Activated CD4-positive, alpha-beta memory T cell treated with anti-CD3 and anti-CD28 coated beads for 36 hours (primary cell): ENCODE measurements at regions of chr5 and their contacts with region 1.

Region 1: DNA sequence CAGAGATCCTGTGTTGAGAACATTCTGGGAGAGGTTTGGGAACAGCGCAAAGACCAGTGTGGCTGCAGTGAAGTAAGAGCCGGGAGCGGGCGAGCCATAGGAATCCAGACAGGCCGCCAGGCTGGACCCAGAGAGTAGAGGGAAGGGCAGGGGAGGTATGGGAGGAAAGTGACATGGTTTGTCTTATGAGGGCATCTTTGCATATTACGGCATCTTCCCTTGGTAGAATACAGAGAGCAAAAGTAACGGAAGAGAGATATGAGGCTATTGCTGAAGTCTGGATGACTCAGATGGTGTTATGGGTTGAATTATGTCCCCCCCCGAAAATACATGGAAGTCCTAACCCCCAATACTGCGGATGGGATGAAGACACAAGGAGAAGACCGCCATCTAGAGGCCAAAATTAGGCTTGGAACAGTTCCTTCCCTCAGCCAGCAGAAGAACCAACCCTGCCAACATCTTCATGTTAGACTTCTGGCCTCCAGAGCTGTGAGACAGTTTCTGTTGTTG is 268.2 kb downstream of the MAST4 start:
- DNase-seq: peak; percentile 37
- H3K4me3 Mint-ChIP-seq: no peak overlapping the region
- H3K27ac Mint-ChIP-seq: no peak overlapping the region
- H3K4me1 Mint-ChIP-seq: peaks cover 8% of the 10 kb centered on the region
- H3K27me3 Mint-ChIP-seq: peaks cover 10% of the 10 kb centered on the region

Region 2: DNA sequence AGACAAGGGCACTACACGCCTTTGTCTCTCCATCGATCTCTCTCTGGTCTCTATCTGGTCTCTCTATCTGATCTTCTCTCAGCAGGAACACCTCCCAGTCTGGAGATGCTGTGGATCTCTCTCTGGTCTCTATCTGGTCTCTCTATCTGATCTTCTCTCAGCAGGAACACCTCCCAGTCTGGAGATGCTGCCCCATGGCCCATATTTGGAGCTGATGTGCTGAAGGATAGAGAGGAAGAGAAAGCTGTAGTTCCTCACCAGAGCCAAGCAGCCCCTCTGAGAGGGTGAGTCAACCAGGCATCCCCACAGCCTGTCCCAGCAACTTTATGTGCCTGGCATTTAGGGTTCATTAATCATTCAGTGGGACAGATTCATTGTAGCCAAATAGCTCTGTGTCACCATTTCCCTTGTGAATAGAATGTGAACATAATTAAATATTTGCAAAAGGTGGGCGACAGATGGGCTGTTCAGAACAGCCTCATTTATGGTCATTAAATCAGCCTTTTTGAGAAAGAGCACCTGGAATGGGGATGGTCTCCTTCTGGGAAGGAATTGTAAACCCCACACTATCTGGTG is 457.5 kb before region 1 on chr5:
- CTCF ChIA-PET with region 1: no interaction called
- POLR2A ChIA-PET with region 1: no interaction called
- intact Hi-C with region 1: no loop called
- DNase-seq: no peak
- H3K4me3 Mint-ChIP-seq: no peak overlapping the region
- H3K27ac Mint-ChIP-seq: no peak overlapping the region
- H3K4me1 Mint-ChIP-seq: no peaks in the 10 kb centered on the region
- H3K27me3 Mint-ChIP-seq: peaks cover 12% of the 10 kb centered on the region

Region 3: DNA sequence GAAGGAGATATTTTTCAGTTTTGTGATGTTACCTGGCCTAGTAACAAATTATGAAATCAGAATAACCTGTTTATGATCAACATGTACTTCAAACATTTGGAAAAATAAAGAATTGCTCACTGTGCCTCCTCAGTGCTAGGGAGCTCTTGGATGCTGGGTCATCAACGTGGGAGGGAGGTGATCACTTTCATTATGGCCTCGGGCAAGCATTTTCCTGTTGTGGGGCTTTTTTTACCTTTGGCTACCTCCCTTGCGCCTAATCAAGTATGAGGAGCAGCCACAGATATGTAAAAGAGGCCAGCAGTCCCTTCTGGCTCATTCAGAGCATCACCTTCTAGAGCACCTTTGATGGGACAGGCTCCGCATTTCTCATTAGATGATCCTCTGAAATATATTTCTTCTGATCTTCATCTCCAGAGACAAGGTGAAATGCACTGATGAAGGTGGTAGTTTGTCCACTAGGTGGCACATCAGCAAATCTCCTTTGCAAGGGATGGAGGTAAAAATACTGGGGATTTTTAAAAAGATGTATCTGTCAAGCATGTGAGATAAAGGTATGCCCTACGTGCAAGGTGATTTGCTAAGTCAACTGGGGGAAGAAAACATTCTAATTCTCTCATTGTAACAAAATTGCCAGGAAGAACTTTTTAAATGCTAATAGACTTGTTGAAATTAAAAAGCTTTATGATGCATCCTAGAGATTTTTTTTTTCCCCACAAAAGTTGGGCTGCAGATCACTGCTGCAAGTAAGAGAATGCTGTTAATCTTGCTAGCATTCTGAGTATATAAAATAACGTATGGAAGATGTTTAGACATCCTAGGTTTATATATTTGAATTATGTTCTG is 50.0 kb before region 1 on chr5:
- CTCF ChIA-PET with region 1: interaction called, 37 read pairs
- POLR2A ChIA-PET with region 1: no interaction called
- intact Hi-C with region 1: loop called (anchors 1 kb)
- DNase-seq: peak; percentile 56
- H3K4me3 Mint-ChIP-seq: no peak overlapping the region
- H3K27ac Mint-ChIP-seq: no peak overlapping the region
- H3K4me1 Mint-ChIP-seq: peaks cover 2% of the 10 kb centered on the region
- H3K27me3 Mint-ChIP-seq: peaks cover 8% of the 10 kb centered on the region

Region 4: DNA sequence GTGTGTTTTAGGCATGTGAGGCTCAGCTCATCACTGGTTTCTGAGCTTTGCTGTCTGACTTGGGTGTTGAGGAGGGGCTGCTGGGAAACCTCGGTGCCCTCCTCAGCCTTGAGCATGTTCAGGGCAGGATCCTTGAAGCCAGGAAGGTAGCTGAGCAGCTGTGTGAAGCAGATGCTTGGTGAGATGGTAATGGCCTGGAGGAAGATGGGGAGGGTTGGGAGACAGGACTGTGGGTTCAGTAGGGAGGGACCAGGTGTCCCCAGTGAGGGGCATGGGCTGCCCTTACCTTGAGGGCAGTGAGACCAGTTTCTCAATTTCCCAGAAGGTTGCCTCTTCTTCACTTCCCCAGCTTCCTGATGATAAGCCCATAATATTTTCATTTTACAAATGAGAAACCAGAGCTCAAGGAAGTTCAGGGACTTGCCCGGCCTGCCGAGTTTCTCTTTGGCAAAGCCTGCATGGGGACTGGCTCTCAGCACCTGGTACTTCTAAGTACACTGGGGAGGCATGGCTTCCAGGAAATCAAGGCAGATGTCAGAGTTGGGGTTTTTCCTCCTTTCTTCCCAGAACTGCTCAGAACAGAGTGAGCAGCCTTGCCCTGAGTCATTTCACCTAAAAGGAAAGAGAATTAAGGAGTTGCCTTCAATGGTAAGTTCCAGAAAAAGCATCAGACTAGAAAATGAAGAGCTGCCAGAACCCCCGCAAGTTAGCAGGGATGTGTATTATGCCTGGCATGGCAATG is 42.5 kb before region 1 on chr5:
- CTCF ChIA-PET with region 1: interaction called, 13 read pairs
- POLR2A ChIA-PET with region 1: no interaction called
- intact Hi-C with region 1: loop called (anchors 5 kb)
- DNase-seq: peak; percentile 77
- H3K4me3 Mint-ChIP-seq: peak overlapping the region; percentile 48
- H3K27ac Mint-ChIP-seq: peak overlapping the region; percentile 88
- H3K4me1 Mint-ChIP-seq: peaks cover 34% of the 10 kb centered on the region
- H3K27me3 Mint-ChIP-seq: no peaks in the 10 kb centered on the region

Region 5: DNA sequence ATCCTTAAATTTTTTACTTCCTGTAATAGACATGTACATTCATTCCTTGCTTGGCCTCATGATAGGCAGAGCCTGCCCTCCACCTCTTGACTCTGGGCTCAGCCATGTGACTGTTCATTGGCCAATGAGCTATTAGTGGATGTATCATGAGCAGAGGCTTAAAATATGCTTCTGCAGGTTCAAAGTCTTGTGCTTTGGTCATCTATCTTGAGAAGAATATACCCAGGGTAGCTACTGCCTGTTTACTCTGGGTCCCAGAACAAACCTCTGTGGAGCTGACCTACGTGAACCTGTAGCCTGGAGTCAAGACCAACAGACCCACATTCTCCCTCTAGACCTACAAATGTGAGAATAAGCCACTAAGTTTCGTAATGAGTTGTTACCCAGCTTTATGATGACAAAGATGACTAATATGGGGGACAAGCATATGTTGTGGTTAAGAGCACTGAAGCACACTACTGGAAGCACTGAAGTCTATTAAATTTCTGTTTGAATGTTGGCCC is 23.8 kb before region 1 on chr5:
- CTCF ChIA-PET with region 1: interaction called, 8 read pairs
- POLR2A ChIA-PET with region 1: interaction called, 7 read pairs
- intact Hi-C with region 1: loop called (anchors 2 kb)
- DNase-seq: peak; percentile 60
- H3K4me3 Mint-ChIP-seq: no peak overlapping the region
- H3K27ac Mint-ChIP-seq: peak overlapping the region; percentile 88
- H3K4me1 Mint-ChIP-seq: peaks cover 52% of the 10 kb centered on the region
- H3K27me3 Mint-ChIP-seq: peaks cover 25% of the 10 kb centered on the region

Region 6: GRCh38 chr5:66875315-66875714 is 10.9 kb after region 1 on chr5:
- CTCF ChIA-PET with region 1: interaction called, 12 read pairs
- POLR2A ChIA-PET with region 1: no interaction called
- intact Hi-C with region 1: no loop called
- DNase-seq: no peak
- H3K4me3 Mint-ChIP-seq: no peak overlapping the region
- H3K27ac Mint-ChIP-seq: no peak overlapping the region
- H3K4me1 Mint-ChIP-seq: peaks cover 7% of the 10 kb centered on the region
- H3K27me3 Mint-ChIP-seq: peaks cover 6% of the 10 kb centered on the region

Region 7: GRCh38 chr5:67058998-67059743 is 194.8 kb after region 1 on chr5:
- CTCF ChIA-PET with region 1: no interaction called
- POLR2A ChIA-PET with region 1: no interaction called
- intact Hi-C with region 1: no loop called
- DNase-seq: no peak
- H3K4me3 Mint-ChIP-seq: no peak overlapping the region
- H3K27ac Mint-ChIP-seq: no peak overlapping the region
- H3K4me1 Mint-ChIP-seq: peaks cover 18% of the 10 kb centered on the region
- H3K27me3 Mint-ChIP-seq: no peaks in the 10 kb centered on the region

Region 8: DNA sequence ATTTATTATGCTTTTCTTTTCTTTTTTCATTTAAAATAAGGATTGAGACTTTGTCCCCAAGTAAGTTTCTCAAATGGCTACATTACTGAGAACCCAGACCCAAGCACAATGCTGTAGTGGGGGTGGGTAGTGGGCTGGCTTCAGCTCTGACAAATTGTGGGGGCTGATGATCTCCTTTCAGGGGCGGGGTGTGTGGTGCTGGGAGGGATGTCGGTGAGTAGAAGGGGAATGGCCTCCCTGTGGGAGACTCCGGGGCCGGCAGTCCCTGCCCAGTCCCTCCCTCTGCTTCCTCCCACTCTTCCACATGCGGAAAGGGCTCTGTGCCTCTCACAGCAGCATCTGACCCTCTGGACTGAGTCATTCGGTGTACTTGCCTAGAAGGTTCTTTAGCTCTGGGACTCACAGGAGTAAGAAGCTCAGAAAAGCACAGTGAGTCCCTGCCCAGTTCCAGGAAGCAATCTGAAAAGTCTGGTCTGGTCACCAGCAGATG is 318.0 kb after region 1 on chr5:
- CTCF ChIA-PET with region 1: no interaction called
- POLR2A ChIA-PET with region 1: no interaction called
- intact Hi-C with region 1: no loop called
- DNase-seq: no peak
- H3K4me3 Mint-ChIP-seq: peak overlapping the region; percentile 14
- H3K27ac Mint-ChIP-seq: peak overlapping the region; percentile 38
- H3K4me1 Mint-ChIP-seq: peaks cover 44% of the 10 kb centered on the region
- H3K27me3 Mint-ChIP-seq: no peaks in the 10 kb centered on the region